ENCODE measurements at regions of chr16 and their contacts with region 1.

Region 1: GRCh38 chr16:67028555-67029248 is at the start of gene CBFB:
- DNase-seq: peak; percentile 94
- H3K4me3 Mint-ChIP-seq: peak within 1 kb of the TSS; percentile 93
- H3K27ac Mint-ChIP-seq: peak within 1 kb of the TSS; percentile 92
- H3K4me1 Mint-ChIP-seq: peaks cover 61% of the 10 kb centered on the region
- H3K27me3 Mint-ChIP-seq: no peaks in the 10 kb centered on the region
- total RNA-seq, gene CBFB: 236 to 238 TPM

Region 2: DNA sequence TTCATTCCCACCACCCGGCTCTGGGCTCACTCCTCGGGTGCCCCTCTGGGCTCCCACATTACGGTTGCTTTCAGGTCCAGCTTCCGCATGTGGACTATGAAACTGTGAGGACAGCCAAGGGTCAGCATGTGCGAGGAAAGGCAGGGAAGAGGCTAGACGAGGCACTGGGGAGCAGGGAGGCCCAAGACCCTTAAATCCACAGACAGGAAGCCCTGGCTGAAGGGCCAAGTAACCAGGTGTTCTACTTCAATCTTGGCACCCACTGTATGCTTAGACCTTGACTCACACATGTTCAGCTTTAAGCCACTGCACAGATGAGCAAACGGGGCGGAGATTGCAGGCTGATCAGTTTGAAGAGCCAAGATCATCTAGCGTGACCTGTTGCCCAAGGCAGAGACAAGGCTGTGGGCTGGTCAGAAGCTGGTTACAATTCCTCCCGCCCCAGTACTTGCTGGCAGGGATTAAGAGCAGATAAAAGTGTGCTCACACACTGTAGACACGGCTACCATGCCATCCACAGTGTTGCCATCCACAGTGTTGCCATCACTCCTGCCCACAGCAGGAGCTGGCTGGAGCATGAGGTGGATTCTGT is 40.4 kb before region 1 on chr16 and contains the start of gene CES4A:
- CTCF ChIA-PET with region 1: interaction called, 5 read pairs
- POLR2A ChIA-PET with region 1: interaction called, 35 read pairs
- DNase-seq: no peak
- H3K4me3 Mint-ChIP-seq: no peak within 1 kb of the TSS
- H3K27ac Mint-ChIP-seq: peak within 1 kb of the TSS; percentile 98
- H3K4me1 Mint-ChIP-seq: peaks cover 47% of the 10 kb centered on the region
- H3K27me3 Mint-ChIP-seq: no peaks in the 10 kb centered on the region
- total RNA-seq, gene CES4A: 37.8 to 39.3 TPM

Region 3: DNA sequence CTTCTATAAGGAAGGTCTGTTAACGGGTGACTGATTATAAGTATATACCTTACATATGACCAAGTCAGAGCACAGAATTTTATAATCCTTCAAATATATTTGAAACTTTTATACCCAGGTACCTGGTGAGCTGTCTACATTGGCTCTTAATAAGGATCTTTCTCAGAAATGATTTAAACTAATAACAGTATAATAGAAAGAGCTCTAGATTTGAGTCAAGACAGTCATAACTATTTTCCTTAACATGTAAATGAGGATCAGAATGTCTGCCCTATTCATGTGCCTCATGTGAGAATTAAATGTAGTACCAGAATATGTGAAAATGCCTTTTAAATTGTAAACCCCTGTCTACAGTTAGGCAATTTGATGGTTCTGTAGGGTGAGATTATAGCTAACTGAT is 14.7 kb after region 1 on chr16:
- CTCF ChIA-PET with region 1: interaction called, 4 read pairs
- POLR2A ChIA-PET with region 1: interaction called, 14 read pairs
- DNase-seq: no peak
- H3K4me3 Mint-ChIP-seq: no peak overlapping the region
- H3K27ac Mint-ChIP-seq: no peak overlapping the region
- H3K4me1 Mint-ChIP-seq: peaks cover 38% of the 10 kb centered on the region
- H3K27me3 Mint-ChIP-seq: no peaks in the 10 kb centered on the region

Region 4: GRCh38 chr16:67055712-67056487 is 27.2 kb after region 1 on chr16:
- CTCF ChIA-PET with region 1: no interaction called
- POLR2A ChIA-PET with region 1: interaction called, 43 read pairs
- DNase-seq: peak; percentile 30
- H3K4me3 Mint-ChIP-seq: peak overlapping the region; percentile 13
- H3K27ac Mint-ChIP-seq: peak overlapping the region; percentile 85
- H3K4me1 Mint-ChIP-seq: peaks cover 66% of the 10 kb centered on the region
- H3K27me3 Mint-ChIP-seq: no peaks in the 10 kb centered on the region

Region 5: GRCh38 chr16:67183627-67184328 is 155.1 kb after region 1 on chr16 and contains the start of gene MATCAP1:
- CTCF ChIA-PET with region 1: interaction called, 5 read pairs
- POLR2A ChIA-PET with region 1: interaction called, 13 read pairs
- DNase-seq: peak; percentile 96
- H3K4me3 Mint-ChIP-seq: peak within 1 kb of the TSS; percentile 78
- H3K27ac Mint-ChIP-seq: no peak within 1 kb of the TSS
- H3K4me1 Mint-ChIP-seq: peaks cover 24% of the 10 kb centered on the region
- H3K27me3 Mint-ChIP-seq: peaks cover 10% of the 10 kb centered on the region
- total RNA-seq, gene MATCAP1: 63.9 to 70.9 TPM